ENCODE measurements at regions of chr2 and their contacts with region 1.

Region 1: GRCh38 chr2:186641807-186642321 is 52.0 kb upstream of the FAM171B start:
- DNase-seq: no peak
- H3K4me3 Mint-ChIP-seq: no peak overlapping the region
- H3K27ac Mint-ChIP-seq: no peak overlapping the region
- H3K4me1 Mint-ChIP-seq: peaks cover 23% of the 10 kb centered on the region
- H3K27me3 Mint-ChIP-seq: no peaks in the 10 kb centered on the region

Region 2: GRCh38 chr2:186485871-186486650 is 155.8 kb before region 1 on chr2 and contains the start of gene ZC3H15:
- intact Hi-C with region 1: loop called (anchors 1 kb)
- DNase-seq: peak; percentile 95
- H3K4me3 Mint-ChIP-seq: peak within 1 kb of the TSS; percentile 99
- H3K27ac Mint-ChIP-seq: peak within 1 kb of the TSS; percentile 99
- H3K4me1 Mint-ChIP-seq: peaks cover 51% of the 10 kb centered on the region
- H3K27me3 Mint-ChIP-seq: no peaks in the 10 kb centered on the region
- total RNA-seq, gene ZC3H15: 93.6 and 94.5 TPM in 2 replicates

Region 3: DNA sequence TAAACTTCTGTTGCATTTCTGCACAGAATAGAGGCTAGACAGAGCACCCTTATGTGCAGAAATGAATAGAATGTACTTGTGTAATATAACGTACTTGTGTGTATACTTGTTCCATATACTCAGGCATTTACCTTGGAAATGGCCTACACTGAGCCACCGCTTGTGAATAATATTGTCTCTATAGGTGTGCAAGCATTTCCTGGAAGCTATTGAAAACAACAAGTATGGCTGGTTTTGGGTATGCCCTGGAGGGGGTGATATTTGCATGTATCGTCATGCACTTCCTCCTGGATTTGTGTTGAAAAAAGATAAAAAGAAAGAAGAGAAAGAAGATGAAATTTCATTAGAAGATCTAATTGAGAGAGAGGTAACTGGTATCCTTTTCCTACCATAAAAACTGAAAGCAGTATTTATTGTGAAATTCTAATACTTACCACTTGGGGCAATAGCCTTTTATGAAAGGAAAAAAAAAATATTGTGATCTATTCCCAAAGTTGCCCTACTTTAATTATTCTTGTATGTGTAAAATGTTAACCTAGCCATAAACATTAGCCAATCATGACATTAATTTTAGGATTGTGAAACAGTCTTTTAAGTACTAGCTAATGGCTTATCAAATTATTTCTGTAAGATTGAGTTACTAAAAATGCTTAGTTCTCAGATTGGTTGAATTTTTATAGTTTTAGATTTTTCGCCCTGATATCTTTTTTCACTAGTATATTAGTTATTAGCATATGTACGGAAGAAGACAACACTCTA is 137.8 kb before region 1 on chr2:
- intact Hi-C with region 1: loop called (anchors 1 kb)
- DNase-seq: no peak
- H3K4me3 Mint-ChIP-seq: no peak overlapping the region
- H3K27ac Mint-ChIP-seq: no peak overlapping the region
- H3K4me1 Mint-ChIP-seq: peaks cover 5% of the 10 kb centered on the region
- H3K27me3 Mint-ChIP-seq: no peaks in the 10 kb centered on the region

Region 4: DNA sequence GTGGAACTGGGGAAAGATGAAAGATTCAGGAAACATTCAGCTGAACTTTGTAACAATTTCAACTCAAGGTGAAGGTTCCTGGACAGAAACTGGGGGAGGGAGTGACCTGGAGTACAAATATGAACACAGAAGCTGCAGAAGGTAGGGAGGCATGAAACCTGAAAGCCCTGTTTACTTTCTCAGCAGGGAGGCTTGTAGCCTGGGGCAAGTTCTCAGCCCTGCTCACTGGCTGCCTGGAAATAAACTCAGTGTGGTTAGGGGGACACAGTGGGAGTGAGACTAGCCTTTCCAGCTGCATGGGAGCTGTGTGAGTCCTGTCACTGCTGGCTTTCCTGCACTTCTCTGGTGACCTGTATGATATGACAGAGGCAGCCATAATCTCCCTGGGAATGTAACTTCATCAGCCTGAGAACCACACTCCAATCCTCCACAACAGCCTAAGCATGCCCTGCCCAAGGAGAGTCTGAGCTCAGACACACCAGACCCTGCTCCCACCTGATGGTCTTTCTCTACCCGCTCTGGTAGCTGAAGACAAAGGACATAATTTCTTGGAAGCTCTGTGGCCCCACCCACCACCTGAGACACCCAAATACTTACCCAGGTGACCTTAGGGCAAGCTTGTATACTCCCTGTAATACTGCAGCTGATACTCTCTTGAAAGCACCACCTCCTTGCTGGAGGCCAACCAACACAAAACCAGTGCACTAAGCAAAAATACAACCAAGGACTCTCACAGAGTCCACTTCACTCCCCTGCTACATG is 130.2 kb after region 1 on chr2:
- intact Hi-C with region 1: no loop called
- DNase-seq: no peak
- H3K4me3 Mint-ChIP-seq: no peak overlapping the region
- H3K27ac Mint-ChIP-seq: no peak overlapping the region
- H3K4me1 Mint-ChIP-seq: no peaks in the 10 kb centered on the region
- H3K27me3 Mint-ChIP-seq: no peaks in the 10 kb centered on the region

Measured in activated T-helper 2 cell treated with anti-CD3 and anti-CD28 coated beads, Interferon-gamma antibody, Interleukin-2, Interleukin-4, amounts not matched to agents 10 μg/mL and 5 μg/mL and 100 μg/mL, durations not matched to agents 14 hours and 24 hours and 36 hours (primary cell).